ENCODE measurements at regions of chr3 and their contacts with region 1.

Region 1: DNA sequence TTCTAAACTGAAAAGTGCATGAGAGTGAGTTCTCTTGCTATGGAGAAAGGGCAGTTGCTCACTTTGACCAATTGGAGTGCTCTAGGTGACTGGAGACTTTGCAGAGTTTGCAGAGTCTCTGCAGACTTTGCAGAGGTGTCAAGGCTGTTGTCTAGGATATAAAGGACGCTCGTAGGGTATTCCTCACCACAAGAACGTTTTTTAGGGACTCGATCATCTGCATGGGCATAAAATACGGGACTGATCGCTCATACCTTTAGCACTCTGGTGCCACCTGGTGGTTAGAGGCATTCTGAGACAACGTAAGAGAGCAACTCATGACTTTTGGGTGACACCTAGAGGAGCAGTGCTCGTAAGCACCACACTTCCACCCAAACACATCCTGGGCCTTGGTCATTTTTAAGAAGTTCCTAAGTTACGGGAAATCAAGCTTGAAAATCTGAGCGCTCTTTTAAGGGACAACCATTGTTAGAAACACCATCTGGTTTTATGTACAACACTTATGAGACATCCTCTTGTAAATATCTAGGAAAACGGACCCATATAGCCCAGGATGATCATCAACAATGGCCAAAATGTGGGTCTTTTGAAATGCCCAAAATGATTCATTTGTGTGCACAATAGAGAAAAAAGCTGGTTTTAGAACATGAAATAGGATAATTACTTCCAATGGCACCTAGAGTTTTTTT is 51.6 kb upstream of the XCR1 start:
- DNase-seq: peak; percentile 93
- H3K4me3 ChIP-seq: no peak overlapping the region
- H3K27ac ChIP-seq: no peak overlapping the region
- H3K4me1 ChIP-seq: no peaks in the 10 kb centered on the region
- H3K27me3 ChIP-seq: no peaks in the 10 kb centered on the region
- CTCF ChIP-seq: peak; percentile 87 to 99 (median 99)
- POLR2A ChIP-seq: no peak

Region 2: GRCh38 chr3:45995236-45996192 is 83.3 kb before region 1 on chr3 and contains the start of gene FYCO1:
- intact Hi-C with region 1: loop called (anchors 10 kb)
- DNase-seq: peak; percentile 93
- H3K4me3 ChIP-seq: peak within 1 kb of the TSS; percentile 67 to 85
- H3K27ac ChIP-seq: peak within 1 kb of the TSS; percentile 83 to 89
- H3K4me1 ChIP-seq: peaks cover 11% of the 10 kb centered on the region
- H3K27me3 ChIP-seq: no peaks in the 10 kb centered on the region
- CTCF ChIP-seq: peak in 1 of 4 experiments; percentile 14
- POLR2A ChIP-seq: peak; percentile 71
- total RNA-seq, gene FYCO1: 33.1 to 56.7 TPM

Region 3: DNA sequence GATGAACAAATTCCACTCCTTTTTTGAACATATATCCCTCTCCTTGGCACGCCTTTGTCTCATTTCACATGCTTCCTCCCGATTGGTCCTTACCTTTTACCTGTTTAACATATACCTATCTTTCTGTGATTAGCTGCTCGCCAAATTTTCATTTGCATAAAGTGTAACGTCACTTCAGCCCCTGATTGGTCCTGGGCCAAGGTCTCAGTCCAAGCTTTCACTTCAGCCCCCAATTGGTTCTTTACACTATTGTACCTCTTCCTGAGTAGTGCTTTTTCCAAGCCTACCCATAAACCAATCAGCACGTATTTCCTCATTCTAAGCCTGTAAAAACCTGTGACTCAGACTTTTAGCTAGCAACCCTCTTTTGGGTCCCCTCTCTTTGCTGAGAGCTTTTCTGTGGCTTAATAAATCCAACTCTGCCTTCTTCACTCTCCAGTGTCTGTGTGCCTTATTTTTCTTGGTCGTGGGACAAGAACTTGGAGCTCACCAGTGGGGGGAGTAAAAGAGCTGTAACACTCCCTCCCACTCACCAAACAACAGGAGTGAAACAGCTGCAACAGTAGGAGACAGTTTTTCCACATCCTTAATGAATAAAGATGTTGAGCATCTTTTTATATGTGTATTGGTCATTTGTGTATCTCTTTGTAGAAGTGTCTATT is 51.0 kb before region 1 on chr3:
- intact Hi-C with region 1: no loop called
- DNase-seq: no peak
- H3K4me3 ChIP-seq: no peak overlapping the region
- H3K27ac ChIP-seq: no peak overlapping the region
- H3K4me1 ChIP-seq: no peaks in the 10 kb centered on the region
- H3K27me3 ChIP-seq: no peaks in the 10 kb centered on the region
- CTCF ChIP-seq: no peak
- POLR2A ChIP-seq: no peak

Region 4: DNA sequence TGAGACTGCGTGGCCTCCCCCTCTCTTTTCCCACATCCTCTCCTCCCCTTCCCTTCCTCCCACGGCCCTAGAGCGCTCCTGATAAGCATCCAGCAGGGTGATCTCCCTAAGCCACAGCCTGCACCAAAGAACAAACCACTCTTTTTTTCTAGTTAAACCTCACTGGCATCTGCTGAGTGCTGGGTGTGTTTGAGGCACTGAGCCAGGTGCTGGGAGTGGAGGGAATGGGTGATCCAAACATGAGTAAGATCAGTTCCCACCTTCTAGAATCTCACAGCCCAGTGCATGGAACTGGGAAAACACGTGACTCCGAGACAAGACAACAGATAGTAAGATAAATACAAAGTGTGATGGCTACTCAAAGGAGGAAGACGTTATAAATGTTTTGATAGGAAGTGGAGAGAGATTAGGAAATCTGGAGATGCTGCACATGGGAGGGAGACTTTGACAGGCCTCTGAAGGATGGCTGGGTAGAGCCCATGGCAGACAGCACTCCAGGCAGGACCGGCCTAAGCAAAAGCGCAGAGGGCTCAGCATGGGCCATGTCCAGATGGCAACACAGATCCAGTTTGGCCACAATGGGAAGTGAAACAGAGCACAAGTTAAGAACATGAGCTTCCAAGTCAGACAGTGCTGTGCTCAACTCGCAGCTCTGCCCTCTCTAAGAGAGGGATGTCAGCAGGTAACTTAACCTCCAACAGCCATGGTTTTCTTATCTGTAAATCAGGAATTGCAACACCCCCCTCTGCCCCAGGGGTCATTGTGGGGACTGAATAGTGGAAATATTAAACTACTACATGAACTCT is 219.0 kb after region 1 on chr3:
- intact Hi-C with region 1: no loop called
- DNase-seq: no peak
- H3K4me3 ChIP-seq: no peak overlapping the region
- H3K27ac ChIP-seq: no peak overlapping the region
- H3K4me1 ChIP-seq: no peaks in the 10 kb centered on the region
- H3K27me3 ChIP-seq: no peaks in the 10 kb centered on the region
- CTCF ChIP-seq: no peak
- POLR2A ChIP-seq: no peak

Region 5: DNA sequence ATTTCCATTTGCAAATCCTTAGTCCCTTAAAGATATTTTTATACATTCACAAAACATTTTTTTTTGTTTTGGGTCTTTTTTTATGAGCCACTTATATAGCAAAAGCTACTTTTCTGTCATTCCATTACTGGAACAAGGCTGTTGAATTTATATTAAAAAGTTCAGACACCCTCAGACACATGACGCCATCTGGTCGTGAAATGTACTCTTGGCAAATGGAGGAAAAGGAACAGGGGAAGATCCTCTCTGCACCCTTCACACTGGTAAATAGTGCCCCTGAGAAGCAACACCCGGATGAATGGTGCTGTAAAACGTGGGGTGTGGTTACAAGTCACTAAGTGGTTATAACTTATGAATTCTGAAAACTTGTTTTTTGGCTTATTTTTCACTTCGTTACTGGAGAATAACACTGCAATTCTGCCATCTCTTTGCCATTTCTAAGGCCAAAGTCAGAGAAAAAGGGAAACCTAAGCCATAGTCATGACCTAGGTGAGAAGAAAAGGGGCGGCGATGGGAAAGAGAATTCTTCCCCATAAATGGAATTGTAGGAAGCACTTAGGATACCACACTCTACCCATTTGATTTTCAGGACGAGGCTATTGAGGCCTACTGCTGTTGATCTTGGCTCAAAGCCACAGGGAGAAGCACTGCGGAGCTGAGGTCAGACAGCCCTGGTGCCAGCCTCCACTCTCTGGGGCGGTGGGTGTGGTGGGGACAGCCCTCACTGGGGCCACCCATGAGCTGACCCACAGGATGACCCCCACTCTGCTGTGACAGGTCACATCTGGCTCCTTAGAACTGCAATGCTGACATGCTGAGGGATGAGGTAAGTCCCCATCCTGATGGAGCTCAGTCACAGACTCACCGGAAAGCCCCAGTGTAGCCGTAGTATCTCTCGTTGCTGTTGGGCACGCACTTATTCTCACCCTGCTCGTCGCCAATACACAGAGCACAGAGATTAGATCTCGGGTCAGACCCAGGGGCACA is 364.0 kb after region 1 on chr3:
- intact Hi-C with region 1: no loop called
- DNase-seq: no peak
- H3K4me3 ChIP-seq: no peak overlapping the region
- H3K27ac ChIP-seq: no peak overlapping the region
- H3K4me1 ChIP-seq: no peaks in the 10 kb centered on the region
- H3K27me3 ChIP-seq: no peaks in the 10 kb centered on the region
- CTCF ChIP-seq: peak in 2 of 4 experiments; percentile 55 to 78
- POLR2A ChIP-seq: no peak

Measured in prostate gland (tissue), 2 donors.